ENCODE measurements at regions of chr2 and their contacts with region 1.

Region 1: GRCh38 chr2:40220177-40220925 is 231.5 kb downstream of the SLC8A1 start:
- DNase-seq: no peak

Region 2: DNA sequence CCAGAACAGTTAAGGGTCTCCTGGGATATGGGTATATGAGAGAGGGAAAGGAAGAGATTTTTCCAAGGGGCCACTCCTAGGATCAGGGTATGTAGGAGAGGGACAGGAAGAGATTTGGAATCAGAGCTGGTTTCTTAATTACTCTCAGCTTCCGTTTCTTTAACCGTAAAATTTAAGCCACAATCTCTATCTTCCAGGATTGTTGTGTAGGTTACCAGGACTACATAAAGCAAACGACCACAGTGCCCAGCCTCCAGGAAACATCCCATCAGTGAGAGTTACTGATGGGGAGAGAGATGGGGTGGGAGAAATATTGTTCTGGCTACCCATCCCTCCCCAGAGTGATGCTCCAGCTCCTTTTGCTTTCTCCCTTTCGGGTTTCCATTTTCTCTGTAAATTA is 326.7 kb before region 1 on chr2:
- CTCF ChIA-PET with region 1: no interaction called
- POLR2A ChIA-PET with region 1: no interaction called
- DNase-seq: no peak

Region 3: DNA sequence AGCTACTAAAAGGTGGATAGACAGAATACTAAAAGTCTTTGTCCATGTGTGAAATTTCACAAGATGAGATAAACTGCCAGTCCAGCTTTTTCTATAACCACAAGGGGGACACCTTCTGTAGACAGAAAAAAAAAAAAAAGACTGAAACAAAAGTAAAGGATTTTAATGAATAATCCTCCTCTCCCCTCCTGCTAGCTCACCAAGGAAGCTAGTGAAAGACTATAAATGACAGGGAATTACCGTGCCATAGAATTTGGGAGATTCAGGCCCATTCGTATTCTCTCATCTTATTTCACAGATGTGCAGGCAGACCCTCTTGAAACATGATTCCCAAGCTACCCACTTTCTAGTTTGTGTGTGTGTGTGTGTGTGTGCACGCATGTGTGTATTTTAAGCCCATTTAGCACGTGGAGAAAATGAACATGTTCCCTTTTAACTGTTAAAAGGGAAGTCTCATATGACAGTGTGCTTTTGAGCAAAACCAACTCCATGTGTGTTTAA is 267.8 kb after region 1 on chr2:
- CTCF ChIA-PET with region 1: interaction called, 10 read pairs
- POLR2A ChIA-PET with region 1: no interaction called
- DNase-seq: peak; percentile 18

Measured in HEK293T (cell line).